ENCODE measurements at regions of chr5 and their contacts with region 1.

Region 1: DNA sequence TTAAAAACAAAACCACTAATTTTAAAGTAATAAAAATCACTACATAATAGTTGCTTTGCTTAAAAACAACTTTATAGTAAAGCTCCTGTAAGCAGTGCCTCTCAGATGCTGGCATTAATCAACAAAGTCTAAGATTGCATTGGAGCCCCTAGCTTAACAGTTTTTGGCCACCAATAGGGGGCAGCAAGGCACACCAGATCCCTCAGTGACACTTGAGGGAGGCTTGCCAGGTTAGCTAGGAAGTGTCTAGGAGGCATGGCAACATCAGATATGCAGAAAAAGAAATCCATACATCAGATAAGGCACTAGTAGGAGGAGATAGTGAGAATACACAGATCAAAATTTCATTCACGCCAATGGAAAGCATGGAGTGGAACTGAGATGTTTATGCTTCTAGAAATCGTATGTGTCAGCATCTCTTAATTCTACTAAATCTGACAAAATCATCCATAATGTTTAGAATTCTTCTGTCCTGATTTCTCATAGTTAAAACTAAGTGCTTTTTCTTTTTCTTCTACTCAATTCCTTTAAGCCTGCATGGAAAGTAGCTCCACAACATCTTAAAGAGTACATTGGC is 73.6 kb upstream of the PAM start:
- DNase-seq: peak in 9 of 10 donors; percentile 28 to 94 (median 71)

Region 2: DNA sequence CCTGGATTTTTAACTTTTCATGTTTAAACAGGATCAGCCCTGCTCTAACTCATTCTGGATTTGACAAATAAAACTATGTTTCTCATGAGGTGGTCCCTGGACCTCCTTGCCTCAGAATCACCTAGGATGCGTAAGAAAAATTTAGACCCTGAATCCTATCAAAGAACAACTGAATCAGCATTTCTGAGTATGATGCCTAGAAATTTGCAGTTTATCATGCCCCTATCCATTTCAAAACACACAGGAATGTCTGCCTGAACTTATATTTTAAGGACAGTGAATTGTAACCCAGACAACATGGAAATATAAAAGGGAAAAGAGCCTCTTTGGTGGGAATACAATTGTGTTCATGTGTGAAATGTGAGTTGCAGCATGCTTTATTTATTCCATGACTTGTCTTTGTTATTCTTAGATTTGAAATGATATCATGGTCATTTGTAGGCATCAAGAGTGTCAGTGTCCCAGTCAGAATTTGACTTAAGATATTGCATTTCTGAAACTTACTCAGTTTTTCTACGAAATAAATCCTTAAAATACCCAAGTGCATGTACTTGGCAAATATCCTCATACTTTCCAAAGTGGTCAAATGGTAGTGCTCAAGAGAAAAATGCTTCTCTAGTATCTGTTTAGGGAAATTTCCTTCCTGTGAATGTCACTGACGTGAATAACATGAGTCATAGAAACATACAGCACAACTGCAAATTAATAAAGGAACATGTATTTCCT is 294.1 kb after region 1 on chr5:
- intact Hi-C with region 1: no loop called
- DNase-seq: no peak

Region 3: GRCh38 chr5:103041071-103041676 is 359.7 kb after region 1 on chr5:
- intact Hi-C with region 1: loop called (anchors 2 kb)
- DNase-seq: no peak